Heart right ventricle (tissue), 16 donors: ENCODE measurements at regions of chr11 and their contacts with region 1.

Region 1: GRCh38 chr11:122491509-122491908 is 164.0 kb upstream of the UBASH3B start:
- DNase-seq: peak in 1 of 2 donors; percentile 37
- ATAC-seq: peak in 7 of 8 donors; percentile 79 to 98 (median 92)
- H3K4me3 ChIP-seq: no peak overlapping the region
- H3K27ac ChIP-seq: peak overlapping the region in 8 of 10 donors; percentile 5 to 83 (median 33)
- H3K4me1 ChIP-seq: peaks cover 0 to 28% (median 14%) of the 10 kb centered on the region in 9 donors
- H3K27me3 ChIP-seq: no peaks in the 10 kb centered on the region
- CTCF ChIP-seq: no peak

Region 2: GRCh38 chr11:122453586-122453985 is 37.9 kb before region 1 on chr11:
- intact Hi-C with region 1: loop called in 1 of 10 experiments (anchors 5 kb)
- DNase-seq: no peak
- ATAC-seq: no peak
- H3K4me3 ChIP-seq: no peak overlapping the region
- H3K27ac ChIP-seq: no peak overlapping the region
- H3K4me1 ChIP-seq: no peaks in the 10 kb centered on the region
- H3K27me3 ChIP-seq: no peaks in the 10 kb centered on the region
- CTCF ChIP-seq: no peak